OCI-LY7 (cell line): ENCODE measurements at regions of chr20 and their contacts with region 1.

Region 1: GRCh38 chr20:18137412-18138265 is at the starts of genes KAT14 and PET117:
- DNase-seq: peak; percentile 95
- H3K4me3 ChIP-seq: peak within 1 kb of the TSS; percentile 99
- H3K27ac ChIP-seq: peak within 1 kb of the TSS; percentile 57
- H3K4me1 ChIP-seq: peaks cover 19% of the 10 kb centered on the region
- CTCF ChIP-seq: no peak
- total RNA-seq, gene KAT14: 13.1 and 14.9 TPM in 2 replicates
- total RNA-seq, gene PET117: 13.1 and 15.7 TPM in 2 replicates

Region 2: GRCh38 chr20:17699931-17700657 is 437.5 kb before region 1 on chr20 and contains the start of gene BANF2:
- CTCF ChIA-PET with region 1: no interaction called
- POLR2A ChIA-PET with region 1: no interaction called
- intact Hi-C with region 1: no loop called
- DNase-seq: no peak
- H3K4me3 ChIP-seq: no peak within 1 kb of the TSS
- H3K27ac ChIP-seq: no peak within 1 kb of the TSS
- H3K4me1 ChIP-seq: no peaks in the 10 kb centered on the region
- CTCF ChIP-seq: no peak
- total RNA-seq, gene BANF2: not detected in 2 replicates

Region 3: DNA sequence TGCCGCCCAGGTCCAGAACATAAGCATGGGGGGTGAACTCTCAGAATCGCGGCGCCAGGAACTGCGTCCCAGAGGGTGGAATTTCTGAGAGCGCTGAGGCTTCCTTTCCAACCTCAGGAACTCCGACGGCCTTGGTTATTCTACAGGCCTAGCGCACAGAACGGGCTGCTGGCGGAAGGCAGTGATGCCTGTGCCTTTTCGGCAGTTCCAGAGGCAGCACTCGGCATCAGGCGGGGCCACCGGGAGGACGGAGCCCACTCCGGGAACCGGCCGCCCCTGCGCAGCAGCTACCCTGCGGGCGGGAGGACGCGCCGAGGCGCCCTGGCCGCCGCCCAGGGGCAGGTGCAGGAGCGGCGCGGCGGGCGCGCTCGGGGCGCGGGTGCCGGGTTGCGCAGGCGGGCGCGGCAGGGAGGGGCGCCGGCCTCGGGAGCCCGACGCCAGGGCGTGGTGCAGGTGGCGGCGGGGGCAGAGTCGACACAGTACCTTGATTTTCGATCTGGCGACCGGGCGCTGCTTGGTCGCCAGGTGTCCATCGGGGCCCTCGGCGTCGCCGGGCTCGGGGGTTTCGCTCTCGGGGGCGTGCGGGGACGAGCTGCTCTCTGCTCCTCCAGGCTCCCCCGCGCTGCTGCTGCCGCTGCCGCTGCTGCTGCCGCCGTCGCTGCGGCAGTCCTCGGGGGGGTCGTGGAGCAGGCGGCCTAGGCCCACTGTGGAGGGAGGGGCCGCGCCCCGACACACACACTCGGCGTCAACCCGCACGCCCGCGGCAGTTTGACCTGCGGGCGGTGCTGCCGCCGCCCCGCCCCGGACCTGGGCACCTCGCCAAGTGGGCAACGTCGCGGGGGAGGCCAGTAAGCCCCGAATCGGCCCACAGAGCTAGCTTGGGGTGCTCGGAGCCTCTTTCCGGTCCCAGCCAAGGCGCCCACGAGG is 81.2 kb before region 1 on chr20:
- CTCF ChIA-PET with region 1: no interaction called
- POLR2A ChIA-PET with region 1: no interaction called
- intact Hi-C with region 1: no loop called
- DNase-seq: no peak
- H3K4me3 ChIP-seq: no peak overlapping the region
- H3K27ac ChIP-seq: no peak overlapping the region
- H3K4me1 ChIP-seq: no peaks in the 10 kb centered on the region
- CTCF ChIP-seq: no peak

Region 4: GRCh38 chr20:18176318-18176785 is 38.7 kb after region 1 on chr20:
- CTCF ChIA-PET with region 1: no interaction called
- POLR2A ChIA-PET with region 1: no interaction called
- intact Hi-C with region 1: no loop called
- DNase-seq: no peak
- H3K4me3 ChIP-seq: no peak overlapping the region
- H3K27ac ChIP-seq: no peak overlapping the region
- H3K4me1 ChIP-seq: no peaks in the 10 kb centered on the region
- CTCF ChIP-seq: no peak

Region 5: DNA sequence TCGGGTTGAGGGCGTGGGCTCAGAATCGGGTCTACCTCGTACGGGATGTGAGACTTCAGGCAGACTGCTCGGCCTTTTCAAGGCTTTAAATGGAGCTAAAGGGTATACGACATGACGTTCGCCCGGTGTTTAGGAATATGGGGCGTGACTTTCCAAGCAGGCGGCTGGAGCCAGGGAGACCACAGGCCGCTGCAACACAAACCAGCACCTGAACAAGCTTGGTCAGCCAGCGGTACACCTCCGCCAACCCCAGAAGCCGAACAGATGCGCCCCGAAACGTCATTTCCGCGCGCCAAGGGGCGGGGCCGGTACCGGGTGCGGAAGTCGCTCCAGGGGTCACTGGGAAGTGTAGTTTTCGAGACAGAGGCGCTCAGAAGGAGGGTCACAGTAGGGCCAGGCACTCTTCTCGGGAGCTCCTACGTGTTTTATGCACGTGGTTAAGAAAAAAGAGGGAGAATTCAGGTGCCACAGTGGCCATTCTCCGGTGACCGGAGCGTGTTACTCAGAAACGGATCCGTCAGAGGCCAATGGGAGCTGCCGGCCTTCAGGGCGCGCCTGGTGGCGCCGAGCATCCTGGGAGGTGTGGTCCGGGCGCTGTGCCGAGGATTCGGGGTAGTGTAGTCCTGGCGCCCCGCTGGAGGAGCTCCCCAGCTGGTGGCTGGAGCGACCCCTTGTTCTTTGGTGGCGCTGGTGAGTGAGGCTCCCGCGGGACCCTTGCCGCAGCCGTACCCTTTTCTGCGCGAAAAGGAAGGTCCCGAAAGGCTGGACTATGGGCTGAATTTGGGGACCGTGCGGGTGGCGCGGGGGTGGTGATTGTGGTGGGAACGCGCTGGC is 150.5 kb after region 1 on chr20 and contains the start of gene ZNF133:
- CTCF ChIA-PET with region 1: no interaction called
- POLR2A ChIA-PET with region 1: interaction called, 4 read pairs
- intact Hi-C with region 1: loop called (anchors 5 kb)
- DNase-seq: peak; percentile 93
- H3K4me3 ChIP-seq: peak within 1 kb of the TSS; percentile 90
- H3K27ac ChIP-seq: peak within 1 kb of the TSS; percentile 52
- H3K4me1 ChIP-seq: peaks cover 17% of the 10 kb centered on the region
- CTCF ChIP-seq: peak; percentile 58; the same call in 1 of the 2 replicates
- total RNA-seq, gene ZNF133: 5.9 and 11.1 TPM in 2 replicates

Region 6: GRCh38 chr20:19027971-19028370 is 890.3 kb after region 1 on chr20:
- CTCF ChIA-PET with region 1: no interaction called
- POLR2A ChIA-PET with region 1: no interaction called
- intact Hi-C with region 1: no loop called
- DNase-seq: no peak
- H3K4me3 ChIP-seq: no peak overlapping the region
- H3K27ac ChIP-seq: no peak overlapping the region
- H3K4me1 ChIP-seq: peaks cover 4% of the 10 kb centered on the region
- CTCF ChIP-seq: no peak